AG04449 (cell line): ENCODE measurements at regions of chr7 and their contacts with region 1.

Region 1: DNA sequence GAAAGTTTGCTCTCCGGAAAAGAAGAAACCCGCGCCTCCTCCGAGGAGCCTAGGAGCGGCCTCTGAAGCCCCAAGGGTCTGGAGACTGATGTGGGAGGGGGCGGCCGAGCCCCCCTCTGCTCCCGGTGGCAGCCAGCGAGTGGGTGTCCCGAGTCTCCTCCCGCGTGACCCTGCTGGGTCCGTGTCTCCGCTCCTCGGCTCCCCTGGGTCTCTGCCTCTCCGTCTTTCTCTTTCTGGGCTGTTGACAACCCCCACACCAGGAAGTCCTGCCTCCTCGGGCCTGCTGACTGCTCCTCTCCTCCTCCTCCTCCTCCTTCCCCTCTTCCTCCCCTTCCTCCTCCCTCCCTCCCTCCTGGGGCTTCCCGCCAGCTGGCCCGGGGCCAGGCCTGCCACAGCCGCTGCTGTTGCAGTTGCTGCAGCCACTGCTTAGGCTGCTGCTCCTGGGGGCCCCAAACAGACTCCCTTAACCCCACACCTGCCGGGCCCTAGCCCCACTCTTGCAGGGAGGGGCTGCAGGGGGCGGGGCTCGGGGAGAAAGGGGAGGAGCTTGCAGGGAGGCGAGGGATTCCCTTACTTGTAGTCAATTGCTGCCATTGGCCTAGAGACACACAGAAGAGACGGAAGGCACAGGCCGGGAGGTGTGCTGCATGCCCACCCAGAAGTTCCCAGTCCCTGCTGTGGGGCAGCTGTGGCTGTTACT is at the start of gene TSC22D4:
- DNase-seq: peak; percentile 73
- H3K4me3 ChIP-seq: peak within 1 kb of the TSS; percentile 90
- CTCF ChIP-seq: no peak

Region 2: GRCh38 chr7:100271716-100272537 is 207.2 kb before region 1 on chr7:
- CTCF ChIA-PET with region 1: no interaction called
- POLR2A ChIA-PET with region 1: no interaction called
- DNase-seq: peak; percentile 47
- H3K4me3 ChIP-seq: peak overlapping the region; percentile 69
- CTCF ChIP-seq: peak; percentile 43

Region 3: GRCh38 chr7:100489824-100490223 is 10.7 kb after region 1 on chr7:
- CTCF ChIA-PET with region 1: interaction called, 42 read pairs
- POLR2A ChIA-PET with region 1: interaction called, 3 read pairs
- DNase-seq: peak; percentile 51
- H3K4me3 ChIP-seq: no peak overlapping the region
- CTCF ChIP-seq: no peak

Region 4: DNA sequence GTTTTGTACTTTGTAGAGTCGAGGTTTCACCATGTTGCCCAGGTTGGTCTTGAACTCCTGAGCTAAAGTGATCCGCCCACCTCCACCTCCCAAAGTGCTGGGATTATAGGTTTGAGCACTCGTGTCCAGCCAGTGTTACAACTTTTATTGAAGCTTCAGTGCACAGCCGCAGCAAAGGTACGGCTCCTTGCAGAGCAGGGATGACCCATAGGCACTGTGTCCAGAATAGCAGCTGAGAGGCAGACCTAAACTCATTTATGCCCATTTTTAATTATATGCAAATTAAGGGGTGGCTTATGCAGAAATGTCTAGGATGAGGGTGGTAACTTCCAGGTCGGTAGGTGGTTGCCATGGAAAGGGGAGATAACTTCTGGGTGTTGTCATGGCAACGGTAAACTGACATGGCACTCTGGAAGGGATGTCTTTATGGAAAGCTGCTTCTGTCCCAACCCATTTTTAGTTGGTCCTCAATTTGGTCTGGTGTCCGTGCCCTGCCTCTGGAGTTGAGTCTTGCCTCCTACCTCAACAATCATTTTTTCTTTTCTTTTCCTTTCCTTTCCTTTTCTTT is 27.3 kb after region 1 on chr7:
- CTCF ChIA-PET with region 1: interaction called, 19 read pairs
- POLR2A ChIA-PET with region 1: interaction called, 3 read pairs
- DNase-seq: no peak
- H3K4me3 ChIP-seq: no peak overlapping the region
- CTCF ChIP-seq: no peak

Region 5: DNA sequence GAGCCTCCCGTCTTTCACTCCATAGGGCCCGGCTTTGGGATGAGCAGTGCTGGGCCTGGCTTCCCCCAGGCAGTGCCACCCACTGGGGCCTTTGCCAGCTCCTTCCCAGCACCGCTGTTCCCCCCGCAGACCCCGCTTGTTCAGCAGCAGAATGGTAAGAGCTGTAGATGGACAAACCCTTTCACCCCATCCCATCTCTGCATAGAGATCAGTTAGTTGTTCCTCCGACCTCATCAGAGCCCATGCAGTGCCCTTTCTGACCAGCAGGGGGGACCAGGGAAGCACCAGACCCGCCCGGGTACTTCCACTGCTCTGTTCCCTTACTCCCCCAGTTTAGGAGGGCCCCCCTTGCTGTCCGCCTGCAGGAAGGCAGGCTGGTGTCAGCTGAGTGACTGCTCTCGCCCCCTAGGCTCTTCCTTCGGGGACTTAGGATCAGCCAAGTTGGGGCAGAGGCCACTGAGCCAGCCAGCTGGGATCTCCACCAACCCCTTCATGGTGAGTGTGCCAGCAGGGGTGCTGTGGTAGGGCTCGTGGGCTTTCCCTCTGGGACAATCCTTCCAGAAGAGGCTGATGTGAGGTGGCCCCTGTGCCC is 84.8 kb after region 1 on chr7:
- CTCF ChIA-PET with region 1: interaction called, 257 read pairs
- POLR2A ChIA-PET with region 1: no interaction called
- DNase-seq: no peak
- H3K4me3 ChIP-seq: no peak overlapping the region
- CTCF ChIP-seq: peak; percentile 92